ENCODE measurements at regions of chr1 and their contacts with region 1.

Region 1: DNA sequence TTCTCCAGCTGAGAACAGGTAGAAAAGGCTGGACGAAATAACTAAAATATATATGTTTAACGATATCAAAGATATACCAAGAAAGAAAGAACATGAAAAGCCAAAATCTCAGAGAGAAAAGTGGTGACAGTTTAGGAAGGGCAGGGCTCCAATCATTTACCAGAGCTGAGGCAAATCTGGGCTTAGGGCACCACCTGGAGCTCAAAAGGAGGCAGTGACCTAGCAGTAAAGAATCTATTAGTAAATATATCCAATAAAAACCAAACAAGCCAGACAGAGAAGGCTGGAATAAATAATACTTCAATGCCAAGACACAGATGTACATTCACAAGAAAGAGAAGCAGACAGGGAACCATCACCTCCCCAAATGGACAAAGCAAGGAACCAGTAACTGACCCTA is 43.5 kb downstream of the CHIA start:
- DNase-seq: peak; percentile 57
- CTCF ChIP-seq: peak; percentile 58

Region 2: DNA sequence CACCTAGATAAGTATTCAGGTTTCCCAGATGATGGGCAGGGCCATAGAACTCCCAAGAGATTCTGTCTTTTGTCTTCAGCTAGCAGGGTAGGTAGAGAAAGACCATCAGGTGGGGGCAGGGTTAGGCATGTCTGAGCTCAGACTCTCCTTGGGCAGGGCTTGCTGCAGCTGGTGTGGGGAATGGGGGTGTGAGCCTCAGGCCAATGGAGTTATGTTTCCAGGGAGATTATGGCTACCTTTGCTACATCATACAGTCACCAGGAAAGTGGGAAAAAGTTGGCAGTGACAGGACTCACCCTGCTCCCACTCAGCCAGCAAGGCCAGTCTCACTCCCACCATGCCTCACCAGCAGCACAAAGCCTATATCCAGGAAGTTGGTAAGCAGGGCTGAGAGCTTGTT is 272.1 kb before region 1 on chr1:
- CTCF ChIA-PET with region 1: no interaction called
- POLR2A ChIA-PET with region 1: no interaction called
- DNase-seq: no peak
- CTCF ChIP-seq: no peak

Region 3: GRCh38 chr1:111222308-111223125 is 111.7 kb before region 1 on chr1:
- CTCF ChIA-PET with region 1: interaction called, 70 read pairs
- POLR2A ChIA-PET with region 1: no interaction called
- DNase-seq: peak; percentile 68
- CTCF ChIP-seq: peak; percentile 82

Region 4: DNA sequence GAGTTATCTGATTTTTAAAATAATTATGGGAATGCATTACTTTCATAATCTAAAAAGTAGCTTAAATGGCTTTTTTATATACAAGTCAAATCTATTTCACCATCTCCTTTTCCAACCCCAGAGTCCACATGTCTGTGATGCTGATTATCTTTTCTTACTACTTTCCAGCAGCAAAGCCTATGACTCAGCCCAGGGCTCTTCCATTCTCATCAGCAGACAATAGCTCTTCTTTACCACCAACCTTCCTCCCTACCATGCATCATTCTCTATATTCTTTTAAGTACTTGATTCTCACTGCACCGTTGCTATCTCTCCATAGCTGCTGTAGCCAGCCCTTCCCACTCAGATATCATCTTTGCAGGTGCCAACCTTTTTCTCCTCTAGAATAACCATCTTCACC is 32.1 kb after region 1 on chr1:
- CTCF ChIA-PET with region 1: no interaction called
- POLR2A ChIA-PET with region 1: no interaction called
- DNase-seq: no peak
- CTCF ChIP-seq: no peak

Region 5: GRCh38 chr1:111769517-111770146 is 435.5 kb after region 1 on chr1:
- CTCF ChIA-PET with region 1: no interaction called
- POLR2A ChIA-PET with region 1: no interaction called
- DNase-seq: peak; percentile 53
- CTCF ChIP-seq: peak; percentile 78

Measured in GM10248 (cell line).